ENCODE measurements at regions of chr18 and their contacts with region 1.

Region 1: DNA sequence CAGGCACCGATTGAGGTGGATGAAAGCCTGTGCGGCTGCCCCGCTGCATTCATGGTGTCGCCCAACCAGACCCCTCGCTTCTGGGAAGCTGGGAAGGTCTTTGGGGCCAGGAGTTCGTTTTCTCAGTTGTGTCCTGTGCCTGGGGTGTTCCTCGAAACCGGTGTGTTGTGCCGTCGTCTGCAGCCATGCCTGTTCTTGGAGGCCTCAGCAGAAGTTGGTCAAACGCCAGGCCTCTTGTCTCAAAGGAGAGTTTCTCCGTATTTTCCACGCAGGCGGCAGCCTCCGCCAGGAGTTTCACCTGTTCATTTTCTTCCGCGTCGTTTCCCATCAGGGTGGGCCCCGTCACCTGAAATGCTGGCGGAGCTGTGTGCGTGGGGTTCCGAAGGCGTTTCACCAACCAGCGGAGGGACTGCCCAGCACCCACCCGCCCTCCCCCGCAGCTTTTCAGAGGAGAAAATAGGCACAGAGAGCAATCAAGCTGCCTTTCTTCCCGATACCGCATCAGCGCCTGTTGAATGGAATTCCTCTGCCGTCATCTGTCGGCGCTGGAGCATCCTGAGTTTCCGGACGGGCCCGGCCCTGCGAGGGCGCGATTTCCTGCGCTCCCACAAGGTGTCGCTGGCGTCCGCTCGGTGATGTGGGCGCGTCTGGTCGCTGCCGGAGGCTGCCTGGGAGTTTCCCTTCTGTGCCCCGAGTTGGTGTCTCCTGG is 17.0 kb upstream of the NFATC1 start:
- DNase-seq: peak; percentile 26
- ATAC-seq: peak; percentile 83
- H3K4me3 ChIP-seq: no peak overlapping the region
- H3K27ac ChIP-seq: no peak overlapping the region; the same call in 1 of the 2 replicates
- H3K4me1 ChIP-seq: peaks cover 9% of the 10 kb centered on the region
- H3K27me3 ChIP-seq: no peaks in the 10 kb centered on the region
- CTCF ChIP-seq: peak; percentile 95 to 99 (median 96); a peak in 5 of 6 replicates
- EP300 ChIP-seq: no peak
- POLR2A ChIP-seq: no peak
- RAD21 ChIP-seq: peak; percentile 89

Region 2: GRCh38 chr18:79117380-79117779 is 261.3 kb before region 1 on chr18:
- CTCF ChIA-PET with region 1: no interaction called
- POLR2A ChIA-PET with region 1: no interaction called
- RAD21 ChIA-PET with region 1: no interaction called
- SMC1A ChIA-PET with region 1: no interaction called
- in situ Hi-C with region 1: no loop called
- intact Hi-C with region 1: no loop called
- DNase-seq: no peak
- ATAC-seq: no peak
- H3K4me3 ChIP-seq: no peak overlapping the region
- H3K27ac ChIP-seq: no peak overlapping the region
- H3K4me1 ChIP-seq: no peaks in the 10 kb centered on the region
- H3K27me3 ChIP-seq: no peaks in the 10 kb centered on the region
- CTCF ChIP-seq: no peak
- EP300 ChIP-seq: no peak
- POLR2A ChIP-seq: no peak
- RAD21 ChIP-seq: no peak

Region 3: GRCh38 chr18:79393635-79394533 is 15.2 kb after region 1 on chr18:
- CTCF ChIA-PET with region 1: interaction called, 21 read pairs
- POLR2A ChIA-PET with region 1: interaction called, 5 read pairs
- RAD21 ChIA-PET with region 1: interaction called, 8 read pairs
- SMC1A ChIA-PET with region 1: interaction called, 6 read pairs
- in situ Hi-C with region 1: no loop called
- intact Hi-C with region 1: no loop called
- DNase-seq: no peak
- ATAC-seq: peak; percentile 35
- H3K4me3 ChIP-seq: peak overlapping the region; percentile 68
- H3K27ac ChIP-seq: no peak overlapping the region
- H3K4me1 ChIP-seq: peaks cover 12% of the 10 kb centered on the region
- H3K27me3 ChIP-seq: peaks cover 2 to 21% of the 10 kb centered on the region in 2 experiments; a peak in 3 of 4 replicates
- CTCF ChIP-seq: no peak
- EP300 ChIP-seq: no peak
- POLR2A ChIP-seq: no peak
- RAD21 ChIP-seq: no peak

Region 4: DNA sequence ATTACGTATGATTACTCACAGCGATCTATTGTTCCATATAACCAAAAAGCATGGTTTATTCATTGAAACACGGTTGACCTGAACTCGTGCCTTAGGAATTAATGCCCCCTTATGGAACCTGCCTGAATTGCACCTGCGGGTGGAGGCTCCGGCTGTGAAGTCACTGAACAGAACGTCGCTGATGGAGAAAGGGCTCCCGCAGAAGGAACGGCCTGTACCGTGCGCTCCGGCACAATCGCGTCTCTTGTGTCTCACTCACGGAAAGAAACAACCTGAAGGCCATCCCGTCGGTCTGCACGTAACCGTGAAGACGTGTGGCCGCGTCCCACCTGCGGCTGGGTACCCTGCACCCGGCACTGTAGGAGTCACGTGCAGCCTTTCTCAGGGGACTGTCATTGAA is 150.2 kb after region 1 on chr18:
- CTCF ChIA-PET with region 1: interaction called, 48 read pairs
- POLR2A ChIA-PET with region 1: interaction called, 3 read pairs
- RAD21 ChIA-PET with region 1: interaction called, 9 read pairs
- SMC1A ChIA-PET with region 1: interaction called, 14 read pairs
- in situ Hi-C with region 1: no loop called
- intact Hi-C with region 1: loop called (anchors 1 kb)
- DNase-seq: no peak
- ATAC-seq: peak; percentile 59
- H3K4me3 ChIP-seq: no peak overlapping the region
- H3K27ac ChIP-seq: no peak overlapping the region
- H3K4me1 ChIP-seq: peaks cover 9% of the 10 kb centered on the region
- H3K27me3 ChIP-seq: no peaks in the 10 kb centered on the region
- CTCF ChIP-seq: peak; percentile 83 to 93 (median 84)
- EP300 ChIP-seq: no peak
- POLR2A ChIP-seq: no peak
- RAD21 ChIP-seq: peak; percentile 99

Region 5: GRCh38 chr18:79538635-79539034 is 159.9 kb after region 1 on chr18:
- CTCF ChIA-PET with region 1: no interaction called
- POLR2A ChIA-PET with region 1: interaction called, 4 read pairs
- RAD21 ChIA-PET with region 1: interaction called, 4 read pairs
- SMC1A ChIA-PET with region 1: interaction called, 3 read pairs
- in situ Hi-C with region 1: loop called (anchors 5 kb)
- intact Hi-C with region 1: no loop called
- DNase-seq: no peak
- ATAC-seq: no peak
- H3K4me3 ChIP-seq: no peak overlapping the region
- H3K27ac ChIP-seq: no peak overlapping the region
- H3K4me1 ChIP-seq: no peaks in the 10 kb centered on the region
- H3K27me3 ChIP-seq: no peaks in the 10 kb centered on the region
- CTCF ChIP-seq: no peak
- EP300 ChIP-seq: no peak
- POLR2A ChIP-seq: no peak
- RAD21 ChIP-seq: no peak

Region 6: GRCh38 chr18:79625195-79625923 is 246.7 kb after region 1 on chr18:
- CTCF ChIA-PET with region 1: interaction called, 7 read pairs
- POLR2A ChIA-PET with region 1: interaction called, 3 read pairs
- RAD21 ChIA-PET with region 1: interaction called, 15 read pairs
- SMC1A ChIA-PET with region 1: interaction called, 11 read pairs
- in situ Hi-C with region 1: no loop called
- intact Hi-C with region 1: no loop called
- DNase-seq: peak; percentile 79
- ATAC-seq: peak; percentile 89
- H3K4me3 ChIP-seq: peak overlapping the region; percentile 23; the same call in 1 of the 2 replicates
- H3K27ac ChIP-seq: peak overlapping the region; percentile 89
- H3K4me1 ChIP-seq: peaks cover 32% of the 10 kb centered on the region
- H3K27me3 ChIP-seq: no peaks in the 10 kb centered on the region
- CTCF ChIP-seq: no peak
- EP300 ChIP-seq: peak in 1 of 2 experiments; percentile 39; a peak in 1 of 4 replicates
- POLR2A ChIP-seq: 0 out of 2 replicates have a peak, but pooled peaks have one; percentile 33
- RAD21 ChIP-seq: no peak

Region 7: GRCh38 chr18:79644006-79644665 is 265.4 kb after region 1 on chr18:
- CTCF ChIA-PET with region 1: interaction called, 24 read pairs
- POLR2A ChIA-PET with region 1: no interaction called
- RAD21 ChIA-PET with region 1: interaction called, 28 read pairs
- SMC1A ChIA-PET with region 1: interaction called, 11 read pairs
- in situ Hi-C with region 1: loop called (anchors 5 kb)
- intact Hi-C with region 1: loop called (anchors 1 kb)
- DNase-seq: peak; percentile 15
- ATAC-seq: peak; percentile 99
- H3K4me3 ChIP-seq: no peak overlapping the region
- H3K27ac ChIP-seq: no peak overlapping the region
- H3K4me1 ChIP-seq: peaks cover 3% of the 10 kb centered on the region
- H3K27me3 ChIP-seq: no peaks in the 10 kb centered on the region
- CTCF ChIP-seq: peak; percentile 92 to 98 (median 93)
- EP300 ChIP-seq: no peak
- POLR2A ChIP-seq: no peak
- RAD21 ChIP-seq: peak; percentile 97

Region 8: GRCh38 chr18:80157708-80158343 is 779.1 kb after region 1 on chr18:
- CTCF ChIA-PET with region 1: interaction called, 6 read pairs
- POLR2A ChIA-PET with region 1: no interaction called
- RAD21 ChIA-PET with region 1: no interaction called
- SMC1A ChIA-PET with region 1: interaction called, 5 read pairs
- in situ Hi-C with region 1: no loop called
- intact Hi-C with region 1: loop called (anchors 5 kb)
- DNase-seq: peak; percentile 27
- ATAC-seq: peak; percentile 63
- H3K4me3 ChIP-seq: no peak overlapping the region
- H3K27ac ChIP-seq: no peak overlapping the region
- H3K4me1 ChIP-seq: no peaks in the 10 kb centered on the region
- H3K27me3 ChIP-seq: no peaks in the 10 kb centered on the region
- CTCF ChIP-seq: peak; percentile 85 to 96 (median 86)
- EP300 ChIP-seq: no peak
- POLR2A ChIP-seq: no peak
- RAD21 ChIP-seq: peak; percentile 87